Heart right ventricle (tissue), 16 donors: ENCODE measurements at regions of chr22 and their contacts with region 1.

Region 1: DNA sequence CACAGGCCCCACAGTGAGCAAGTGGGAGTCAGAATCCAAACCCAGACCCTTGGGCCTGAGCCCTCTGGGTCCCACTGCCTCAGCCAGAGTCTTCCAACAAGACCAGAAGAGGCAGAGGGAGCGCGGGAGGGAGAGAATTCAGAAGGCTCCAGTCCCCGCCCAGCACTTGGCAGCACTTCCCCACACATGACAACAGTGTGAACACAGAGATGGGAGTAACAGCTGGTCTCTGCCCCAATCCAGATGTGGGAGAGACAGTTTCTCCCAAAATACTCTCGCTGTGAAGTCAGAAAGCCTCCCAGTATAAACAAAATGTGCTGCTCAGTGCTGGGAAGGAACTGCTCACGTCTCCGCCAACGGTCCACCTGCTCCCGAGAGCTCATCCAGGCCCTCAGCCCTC is 219.9 kb downstream of the MN1 start:
- DNase-seq: peak; percentile 79 to 89
- ATAC-seq: peak; percentile 77 to 85 (median 80)
- H3K4me3 ChIP-seq: no peak overlapping the region
- H3K27ac ChIP-seq: peak overlapping the region in 6 of 10 donors; percentile 62 to 78 (median 67)
- H3K4me1 ChIP-seq: peaks cover 0 to 54% (median 18%) of the 10 kb centered on the region in 9 donors
- H3K27me3 ChIP-seq: peaks cover 0 to 6% (median 0%) of the 10 kb centered on the region in 7 donors
- CTCF ChIP-seq: no peak

Region 2: DNA sequence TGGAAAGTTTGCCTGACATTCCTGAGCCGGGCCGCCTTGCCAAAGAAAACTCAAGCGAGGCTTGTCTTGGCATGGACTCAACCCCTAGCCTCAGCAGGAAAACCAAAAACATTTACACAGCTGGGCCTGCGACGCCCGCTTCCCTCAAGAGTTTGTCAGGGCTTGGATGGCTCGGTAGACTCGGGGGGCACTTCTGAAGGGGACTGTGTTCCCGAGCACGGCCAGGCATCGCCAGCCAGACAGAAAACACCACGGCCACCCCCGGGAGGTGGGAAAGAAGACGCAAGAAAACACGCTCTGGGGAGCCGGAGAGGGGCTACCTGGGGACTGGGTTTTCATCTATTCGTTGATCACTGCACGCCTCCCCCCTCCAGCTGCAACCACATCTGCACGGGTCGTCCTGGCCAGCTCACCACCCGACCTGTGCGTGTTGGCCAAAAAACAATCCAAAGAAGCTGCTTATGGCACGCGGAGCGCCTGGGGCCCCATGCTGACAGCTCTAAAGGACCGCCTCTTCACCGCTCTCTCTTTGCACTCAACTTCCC is 160.8 kb before region 1 on chr22:
- intact Hi-C with region 1: loop called in 1 of 10 experiments (anchors 10 kb)
- DNase-seq: peak; percentile 74 to 89
- ATAC-seq: peak; percentile 82 to 92 (median 88)
- H3K4me3 ChIP-seq: peak overlapping the region in 2 of 10 donors; percentile 23 to 24
- H3K27ac ChIP-seq: peak overlapping the region in 9 of 10 donors; percentile 17 to 83 (median 69)
- H3K4me1 ChIP-seq: peaks cover 14 to 31% (median 18%) of the 10 kb centered on the region in 9 donors
- H3K27me3 ChIP-seq: peaks cover 0 to 12% (median 9%) of the 10 kb centered on the region in 7 donors
- CTCF ChIP-seq: no peak